IMR-90 (cell line): ENCODE measurements at regions of chr2 and their contacts with region 1.

Region 1: GRCh38 chr2:177263451-177264208 is 897 bp downstream of the NFE2L2 start:
- DNase-seq: peak; percentile 97
- ATAC-seq: peak; percentile 50
- H3K4me3 ChIP-seq: peak overlapping the region; percentile 69
- H3K27ac ChIP-seq: peak overlapping the region; percentile 89
- H3K4me1 ChIP-seq: peaks cover 3% of the 10 kb centered on the region
- H3K27me3 ChIP-seq: no peaks in the 10 kb centered on the region
- CTCF ChIP-seq: peak; percentile 90
- POLR2A ChIP-seq: peak; percentile 62
- RAD21 ChIP-seq: peak; percentile 77

Region 2: DNA sequence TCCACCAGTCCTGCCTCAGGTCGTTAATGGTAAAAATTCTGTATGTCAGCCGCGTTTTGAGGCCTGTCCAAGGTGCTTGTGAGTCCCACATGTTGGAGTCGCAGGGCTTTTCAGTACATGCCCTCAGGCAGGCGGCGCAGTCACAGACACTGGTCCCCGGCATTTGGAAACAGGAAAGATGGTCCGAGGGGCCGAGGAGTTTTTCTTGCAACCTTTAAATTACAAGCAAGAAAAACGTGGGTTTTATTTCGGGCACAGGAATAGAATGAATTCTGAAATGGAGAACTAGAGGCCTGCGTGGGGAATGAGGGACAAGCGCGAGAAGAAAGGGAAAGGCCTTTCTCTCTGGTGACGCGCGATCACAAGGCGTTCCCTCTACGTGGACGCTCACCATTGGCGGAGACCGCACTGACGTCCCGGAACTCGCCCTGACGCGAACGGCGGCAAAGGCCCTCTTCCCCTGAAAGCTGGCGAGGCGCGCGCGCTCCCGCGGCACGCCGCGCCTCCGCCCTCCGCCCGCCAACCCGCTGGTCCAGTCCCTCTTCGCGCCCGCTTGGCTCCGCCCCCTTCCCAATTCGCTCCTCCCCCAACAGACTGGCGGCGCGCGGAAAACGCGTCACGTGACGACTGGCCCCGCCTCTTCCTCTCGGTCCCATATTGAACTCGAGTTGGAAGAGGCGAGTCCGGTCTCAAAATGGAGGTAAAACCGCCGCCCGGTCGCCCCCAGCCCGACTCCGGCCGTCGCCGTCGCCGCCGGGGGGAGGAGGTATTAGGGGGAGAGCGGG is 51.3 kb before region 1 on chr2 and contains the start of gene HNRNPA3:
- CTCF ChIA-PET with region 1: interaction called, 3 read pairs
- POLR2A ChIA-PET with region 1: interaction called, 3 read pairs
- dilution Hi-C with region 1: no loop called
- in situ Hi-C with region 1: no loop called
- intact Hi-C with region 1: loop called (anchors 1 kb)
- DNase-seq: peak; percentile 99
- ATAC-seq: peak; percentile 92
- H3K4me3 ChIP-seq: peak within 1 kb of the TSS; percentile 74
- H3K27ac ChIP-seq: peak within 1 kb of the TSS; percentile 94
- H3K4me1 ChIP-seq: no peaks in the 10 kb centered on the region; the same call in none of the 2 replicates
- H3K27me3 ChIP-seq: no peaks in the 10 kb centered on the region
- CTCF ChIP-seq: no peak
- POLR2A ChIP-seq: peak; percentile 95
- RAD21 ChIP-seq: no peak
- total RNA-seq, gene HNRNPA3: 18.6 and 35.6 TPM in 2 replicates

Region 3: DNA sequence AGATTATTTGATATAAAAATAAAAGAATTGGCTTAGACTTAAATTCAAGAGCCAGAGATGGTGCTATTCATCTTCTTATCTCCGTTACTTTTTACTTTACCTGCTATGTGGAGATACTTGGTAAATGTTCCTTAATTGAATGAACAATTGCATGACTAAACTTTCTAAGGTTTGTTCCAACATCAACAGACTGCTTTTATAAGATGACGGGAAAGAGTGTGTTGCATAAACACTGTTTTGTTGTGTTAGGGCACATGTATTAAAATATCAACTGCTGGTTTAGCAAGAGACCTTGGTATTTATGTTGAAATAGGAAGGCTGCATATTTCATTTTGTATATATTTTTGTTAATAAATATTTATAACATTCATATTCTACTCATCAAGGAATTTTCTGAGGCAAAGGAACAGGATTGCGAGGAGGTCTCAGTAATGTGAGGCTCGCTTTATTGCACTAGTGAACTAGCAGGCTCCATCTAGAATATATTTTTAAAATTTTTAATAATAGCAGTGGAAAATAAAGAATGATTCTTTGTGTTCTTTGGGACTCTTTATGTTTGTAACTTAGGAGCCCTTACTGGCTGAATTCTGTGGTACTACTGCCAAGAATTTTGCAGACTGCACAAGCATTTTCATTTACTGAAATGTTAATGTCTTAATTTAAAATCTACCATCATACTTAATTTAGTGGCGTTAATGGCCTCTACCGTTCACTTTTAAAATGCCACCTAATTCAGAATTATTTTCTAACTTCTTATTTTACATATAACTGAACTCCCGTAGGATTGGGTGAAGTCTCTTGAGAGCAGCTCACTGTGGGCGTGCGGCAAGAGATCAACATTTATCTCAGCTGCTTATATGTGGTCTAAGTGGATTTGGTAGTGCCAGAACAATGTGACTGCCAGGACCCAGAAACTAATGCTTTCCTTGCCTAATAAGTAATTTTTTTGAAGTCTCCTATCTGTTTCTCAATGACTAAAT is 11.7 kb after region 1 on chr2:
- CTCF ChIA-PET with region 1: interaction called, 4 read pairs
- POLR2A ChIA-PET with region 1: interaction called, 5 read pairs
- dilution Hi-C with region 1: no loop called
- in situ Hi-C with region 1: no loop called
- intact Hi-C with region 1: loop called (anchors 1 kb)
- DNase-seq: peak; percentile 94
- ATAC-seq: peak; percentile 89
- H3K4me3 ChIP-seq: no peak overlapping the region
- H3K27ac ChIP-seq: peak overlapping the region; percentile 97
- H3K4me1 ChIP-seq: peaks cover 5% of the 10 kb centered on the region
- H3K27me3 ChIP-seq: no peaks in the 10 kb centered on the region
- CTCF ChIP-seq: no peak
- POLR2A ChIP-seq: no peak
- RAD21 ChIP-seq: no peak

Region 4: GRCh38 chr2:177419274-177419673 is 155.6 kb after region 1 on chr2:
- CTCF ChIA-PET with region 1: no interaction called
- POLR2A ChIA-PET with region 1: no interaction called
- dilution Hi-C with region 1: no loop called
- in situ Hi-C with region 1: no loop called
- intact Hi-C with region 1: loop called (anchors 1 kb)
- DNase-seq: peak; percentile 61
- ATAC-seq: no peak
- H3K4me3 ChIP-seq: no peak overlapping the region
- H3K27ac ChIP-seq: no peak overlapping the region
- H3K4me1 ChIP-seq: no peaks in the 10 kb centered on the region
- H3K27me3 ChIP-seq: no peaks in the 10 kb centered on the region
- CTCF ChIP-seq: no peak
- POLR2A ChIP-seq: no peak
- RAD21 ChIP-seq: no peak

Region 5: DNA sequence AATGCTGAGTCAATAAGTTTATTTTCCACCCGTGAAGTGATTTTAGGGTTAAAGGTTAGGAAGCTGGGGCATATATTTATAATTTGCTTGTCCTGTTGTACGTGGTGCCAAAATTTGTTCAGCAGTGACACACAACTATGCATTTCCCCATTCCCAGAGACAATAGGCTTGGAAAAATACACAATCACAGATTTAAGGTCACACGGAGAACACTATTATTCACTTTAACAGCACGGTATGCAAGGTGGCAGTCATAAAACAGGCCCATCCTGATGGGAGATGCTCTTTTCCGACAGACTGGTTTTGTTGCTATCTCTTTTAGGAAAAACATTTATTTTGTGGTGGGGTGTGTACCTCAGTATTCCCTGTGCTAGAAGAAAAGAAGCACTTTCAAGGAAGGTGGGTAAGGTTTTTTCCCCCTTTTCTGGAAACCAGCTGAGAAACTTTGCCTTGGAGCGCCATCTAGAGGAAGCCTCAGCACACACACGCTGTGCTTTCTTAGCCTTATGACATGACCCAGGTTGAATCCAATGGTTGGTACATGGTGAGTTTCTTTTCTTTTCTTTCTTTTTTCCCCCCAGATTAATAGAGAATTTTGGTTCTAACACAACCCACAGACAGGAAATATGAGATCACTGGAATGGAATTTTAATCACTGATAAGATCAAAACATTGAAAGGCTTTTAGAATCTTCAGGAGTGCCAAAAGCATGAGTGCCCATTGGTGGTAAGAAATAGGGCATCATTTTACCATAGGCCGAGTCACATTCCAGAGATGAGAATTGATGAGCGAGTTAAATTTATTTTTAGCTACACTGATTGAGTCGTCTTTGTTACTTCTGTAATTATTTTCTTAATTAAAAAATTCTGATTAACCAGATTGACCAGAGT is 461.0 kb after region 1 on chr2:
- CTCF ChIA-PET with region 1: no interaction called
- POLR2A ChIA-PET with region 1: no interaction called
- dilution Hi-C with region 1: no loop called
- in situ Hi-C with region 1: no loop called
- intact Hi-C with region 1: loop called (anchors 5 kb)
- DNase-seq: peak; percentile 42
- ATAC-seq: peak; percentile 85
- H3K4me3 ChIP-seq: no peak overlapping the region
- H3K27ac ChIP-seq: no peak overlapping the region
- H3K4me1 ChIP-seq: no peaks in the 10 kb centered on the region
- H3K27me3 ChIP-seq: peaks cover 8% of the 10 kb centered on the region
- CTCF ChIP-seq: peak; percentile 82
- POLR2A ChIP-seq: no peak
- RAD21 ChIP-seq: peak; percentile 87